Activated naive CD4-positive, alpha-beta T cell treated with anti-CD3 and anti-CD28 coated beads for 36 hours (primary cell): ENCODE measurements at regions of chr19 and their contacts with region 1.

Region 1: DNA sequence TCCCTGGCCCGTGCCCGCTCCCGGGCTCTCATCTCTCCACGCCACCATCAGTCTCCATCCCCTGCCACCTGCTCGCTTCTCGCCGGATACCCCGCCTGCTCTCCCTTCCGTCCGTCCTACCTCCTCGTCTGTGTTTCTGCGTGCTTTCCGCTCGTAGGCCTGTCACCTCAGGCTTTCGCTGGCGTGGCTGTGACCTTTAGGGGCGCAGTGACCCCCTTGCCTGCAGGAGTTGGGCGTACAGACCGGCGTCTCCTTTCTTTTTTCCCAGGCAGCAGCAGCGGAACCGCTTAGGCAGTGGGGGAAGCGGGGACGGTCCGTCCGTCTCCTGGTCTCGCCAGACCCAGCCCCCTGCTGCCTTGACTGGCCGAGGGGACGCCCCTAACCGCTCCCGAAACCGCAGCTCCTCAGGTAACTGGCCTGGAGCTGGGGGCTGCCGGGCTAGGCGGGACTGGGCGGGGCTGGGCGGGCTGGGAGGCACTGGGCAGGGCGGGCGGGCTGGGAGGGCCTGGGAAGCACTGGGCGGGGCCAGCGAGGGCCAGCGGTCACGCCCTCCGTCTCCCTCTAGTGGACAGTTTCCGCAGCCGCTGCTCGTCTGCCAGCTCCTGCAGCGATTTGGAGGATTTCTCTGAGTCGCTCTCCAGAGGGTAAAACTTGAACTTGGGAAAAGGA is 6.3 kb downstream of the PGLYRP1 start:
- DNase-seq: peak; percentile 86
- H3K4me3 Mint-ChIP-seq: peak overlapping the region; percentile 74
- H3K27ac Mint-ChIP-seq: peak overlapping the region; percentile 62
- H3K4me1 Mint-ChIP-seq: peaks cover 17% of the 10 kb centered on the region
- H3K27me3 Mint-ChIP-seq: peaks cover 15% of the 10 kb centered on the region

Region 2: DNA sequence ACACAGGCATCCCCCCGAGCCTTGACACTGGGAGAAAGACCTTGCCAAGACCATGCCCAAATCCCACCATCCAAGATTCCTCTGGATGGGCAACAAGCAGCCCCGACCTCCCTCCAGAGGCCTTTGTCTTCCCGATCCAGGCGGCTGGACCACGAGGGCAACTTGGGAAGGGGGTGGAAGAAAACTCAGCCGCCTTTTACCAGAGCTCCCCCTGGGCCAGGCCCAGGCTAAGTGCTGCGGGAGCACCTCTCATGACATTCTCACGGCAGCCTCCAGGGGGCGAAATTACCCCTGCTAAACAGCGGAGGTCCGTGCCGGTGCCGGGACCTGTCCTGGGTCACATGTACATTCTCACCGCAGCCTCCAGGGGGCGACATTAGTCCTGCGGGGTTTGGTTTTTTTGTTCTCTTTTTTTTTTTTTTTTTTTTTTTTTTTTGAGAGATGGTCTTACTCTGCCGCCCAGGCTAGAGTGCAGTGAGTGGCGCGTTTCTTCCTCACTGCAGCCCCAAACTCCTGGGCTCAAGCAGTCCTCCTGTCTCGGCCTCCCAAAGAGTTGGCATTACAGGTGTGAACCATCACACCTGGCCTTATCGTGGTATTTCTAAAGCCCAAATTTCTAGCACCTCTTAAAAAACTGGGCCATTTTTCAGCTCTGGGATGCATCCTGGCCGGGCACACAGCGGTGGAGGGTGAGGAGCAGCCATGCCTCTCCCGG is 199.4 kb before region 1 on chr19:
- CTCF ChIA-PET with region 1: no interaction called
- intact Hi-C with region 1: loop called (anchors 2 kb)
- DNase-seq: peak; percentile 99
- H3K4me3 Mint-ChIP-seq: no peak overlapping the region
- H3K27ac Mint-ChIP-seq: no peak overlapping the region
- H3K4me1 Mint-ChIP-seq: peaks cover 10% of the 10 kb centered on the region
- H3K27me3 Mint-ChIP-seq: peaks cover 19% of the 10 kb centered on the region

Region 3: GRCh38 chr19:45902651-45903625 is 113.6 kb before region 1 on chr19:
- CTCF ChIA-PET with region 1: no interaction called
- intact Hi-C with region 1: loop called (anchors 2 kb)
- DNase-seq: peak; percentile 99
- H3K4me3 Mint-ChIP-seq: peak overlapping the region; percentile 88
- H3K27ac Mint-ChIP-seq: peak overlapping the region; percentile 71
- H3K4me1 Mint-ChIP-seq: peaks cover 12% of the 10 kb centered on the region
- H3K27me3 Mint-ChIP-seq: no peaks in the 10 kb centered on the region

Region 4: DNA sequence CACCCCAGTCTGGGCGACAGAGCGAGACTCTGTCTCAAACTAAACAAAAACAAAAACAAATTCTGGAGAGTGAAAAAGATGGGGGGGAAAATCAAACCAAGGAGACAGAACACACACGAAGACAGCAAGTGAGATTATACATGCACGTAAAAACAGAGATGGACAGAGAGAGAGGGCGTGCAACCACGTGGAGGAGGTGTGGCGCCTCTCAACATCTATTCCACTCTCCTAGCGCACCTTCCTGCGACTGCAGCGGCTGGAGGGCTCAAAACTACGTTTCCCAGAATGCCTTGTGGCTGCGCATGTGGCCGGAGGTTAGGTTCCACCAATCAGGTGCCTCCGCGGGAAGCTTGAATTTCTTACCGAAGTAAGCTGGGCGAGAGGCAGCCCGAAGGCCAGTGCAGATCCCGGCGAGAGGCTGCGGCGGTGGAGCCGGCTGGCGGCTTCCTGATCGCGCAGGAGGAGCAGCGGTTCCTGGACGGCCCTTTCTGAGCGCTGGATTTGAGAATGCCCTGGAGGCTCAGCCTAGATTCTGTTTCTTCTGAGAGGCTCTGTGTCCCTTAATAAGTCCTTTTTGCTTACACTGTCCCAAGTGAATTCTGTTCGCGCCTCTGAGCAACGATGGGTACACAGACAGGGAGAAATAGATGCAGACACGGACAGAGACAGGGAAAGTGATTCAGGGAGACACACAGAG is 88.8 kb before region 1 on chr19:
- CTCF ChIA-PET with region 1: interaction called, 3 read pairs
- intact Hi-C with region 1: loop called (anchors 2 kb)
- DNase-seq: peak; percentile 96
- H3K4me3 Mint-ChIP-seq: peak overlapping the region; percentile 74
- H3K27ac Mint-ChIP-seq: no peak overlapping the region
- H3K4me1 Mint-ChIP-seq: peaks cover 7% of the 10 kb centered on the region
- H3K27me3 Mint-ChIP-seq: peaks cover 5% of the 10 kb centered on the region

Region 5: GRCh38 chr19:46002678-46003275 is 13.8 kb before region 1 on chr19:
- CTCF ChIA-PET with region 1: no interaction called
- intact Hi-C with region 1: no loop called
- DNase-seq: no peak
- H3K4me3 Mint-ChIP-seq: no peak overlapping the region
- H3K27ac Mint-ChIP-seq: no peak overlapping the region
- H3K4me1 Mint-ChIP-seq: peaks cover 28% of the 10 kb centered on the region
- H3K27me3 Mint-ChIP-seq: peaks cover 3% of the 10 kb centered on the region